CD8-positive, alpha-beta T cell (primary cell): ENCODE measurements at regions of chr11 and their contacts with region 1.

Region 1: GRCh38 chr11:66638177-66639065 is at the start of gene RBM4:
- DNase-seq: peak; percentile 92 to 100 (median 94)
- ATAC-seq: peak; percentile 89
- H3K4me3 ChIP-seq: peak within 1 kb of the TSS; percentile 87 to 88
- H3K4me3 Mint-ChIP-seq: peak within 1 kb of the TSS; percentile 98
- H3K27ac ChIP-seq: peak within 1 kb of the TSS; percentile 89 to 92
- H3K27ac Mint-ChIP-seq: peak within 1 kb of the TSS; percentile 97
- H3K4me1 ChIP-seq: peaks cover 53% of the 10 kb centered on the region
- H3K4me1 Mint-ChIP-seq: peaks cover 66% of the 10 kb centered on the region
- H3K27me3 ChIP-seq: no peaks in the 10 kb centered on the region
- H3K27me3 Mint-ChIP-seq: no peaks in the 10 kb centered on the region
- CTCF ChIP-seq: no peak
- total RNA-seq, gene RBM4: 183 to 191 TPM

Region 2: DNA sequence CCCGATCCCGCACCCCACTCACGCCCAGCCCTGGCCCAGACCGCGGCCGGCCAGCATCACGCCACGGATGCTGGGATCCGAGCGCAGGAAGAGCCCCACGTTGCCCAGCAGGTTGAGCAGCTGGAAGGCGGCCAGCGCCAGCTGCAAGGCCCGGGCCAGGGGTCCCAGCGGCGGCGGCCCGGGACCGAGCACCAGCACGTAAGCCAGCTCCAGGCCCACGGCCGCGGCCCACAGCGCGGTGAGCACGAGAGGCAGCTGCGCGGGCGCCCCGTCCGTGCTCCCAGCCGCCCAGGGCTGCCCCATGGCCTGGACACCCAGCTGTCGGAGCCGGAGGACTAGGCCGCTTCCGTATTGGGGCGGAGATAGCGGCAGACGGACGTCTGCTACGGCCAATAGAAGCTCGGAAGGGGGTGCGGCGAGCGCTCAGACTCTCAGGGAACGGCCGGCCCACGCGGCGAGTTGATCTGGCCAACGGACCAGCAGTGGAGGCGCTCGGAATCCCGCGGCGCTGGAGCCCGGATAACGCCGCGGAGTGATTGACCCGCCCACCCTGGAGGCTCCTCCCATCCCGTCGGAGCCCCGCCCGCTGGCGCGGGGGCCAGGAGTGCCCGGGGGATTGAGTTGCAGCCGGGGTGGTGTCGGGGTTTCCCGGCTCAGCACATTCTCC is 92.6 kb before region 1 on chr11 and contains the start of gene ZDHHC24:
- CTCF ChIA-PET with region 1: no interaction called
- POLR2A ChIA-PET with region 1: interaction called, 10 read pairs
- intact Hi-C with region 1: loop called in 1 of 2 experiments (anchors 5 kb)
- DNase-seq: peak; percentile 57 to 93 (median 78)
- ATAC-seq: peak; percentile 81
- H3K4me3 ChIP-seq: peak within 1 kb of the TSS; percentile 68 to 97
- H3K4me3 Mint-ChIP-seq: peak within 1 kb of the TSS; percentile 84
- H3K27ac ChIP-seq: peak within 1 kb of the TSS; percentile 79 to 83
- H3K27ac Mint-ChIP-seq: peak within 1 kb of the TSS; percentile 92
- H3K4me1 ChIP-seq: peaks cover 31% of the 10 kb centered on the region
- H3K4me1 Mint-ChIP-seq: peaks cover 40% of the 10 kb centered on the region
- H3K27me3 ChIP-seq: no peaks in the 10 kb centered on the region
- H3K27me3 Mint-ChIP-seq: no peaks in the 10 kb centered on the region
- CTCF ChIP-seq: no peak
- total RNA-seq, gene ZDHHC24: 15.0 to 15.9 TPM

Region 3: GRCh38 chr11:66592457-66593302 is 45.7 kb before region 1 on chr11 and contains the starts of genes CCDC87 and CCS:
- CTCF ChIA-PET with region 1: interaction called, 12 read pairs
- POLR2A ChIA-PET with region 1: interaction called, 35 read pairs
- intact Hi-C with region 1: loop called (anchors 1 kb)
- DNase-seq: peak; percentile 98 to 100 (median 99)
- ATAC-seq: peak; percentile 97
- H3K4me3 ChIP-seq: peak within 1 kb of the TSS; percentile 68 to 97
- H3K4me3 Mint-ChIP-seq: peak within 1 kb of the TSS; percentile 100
- H3K27ac ChIP-seq: peak within 1 kb of the TSS; percentile 84 to 86
- H3K27ac Mint-ChIP-seq: peak within 1 kb of the TSS; percentile 99
- H3K4me1 ChIP-seq: peaks cover 33% of the 10 kb centered on the region
- H3K4me1 Mint-ChIP-seq: peaks cover 39% of the 10 kb centered on the region
- H3K27me3 ChIP-seq: no peaks in the 10 kb centered on the region
- H3K27me3 Mint-ChIP-seq: no peaks in the 10 kb centered on the region
- CTCF ChIP-seq: peak; percentile 55
- total RNA-seq, gene CCDC87: 0.53 to 0.65 TPM
- total RNA-seq, gene CCS: 30.0 to 32.3 TPM

Region 4: GRCh38 chr11:66651016-66651415 is 12.6 kb after region 1 on chr11:
- CTCF ChIA-PET with region 1: interaction called, 6 read pairs
- POLR2A ChIA-PET with region 1: interaction called, 17 read pairs
- intact Hi-C with region 1: no loop called
- DNase-seq: peak in 2 of 9 experiments; percentile 17 to 47
- ATAC-seq: no peak
- H3K4me3 ChIP-seq: no peak overlapping the region
- H3K4me3 Mint-ChIP-seq: no peak overlapping the region
- H3K27ac ChIP-seq: no peak overlapping the region
- H3K27ac Mint-ChIP-seq: no peak overlapping the region
- H3K4me1 ChIP-seq: peaks cover 30% of the 10 kb centered on the region
- H3K4me1 Mint-ChIP-seq: peaks cover 58% of the 10 kb centered on the region
- H3K27me3 ChIP-seq: no peaks in the 10 kb centered on the region
- H3K27me3 Mint-ChIP-seq: no peaks in the 10 kb centered on the region
- CTCF ChIP-seq: no peak

Region 5: DNA sequence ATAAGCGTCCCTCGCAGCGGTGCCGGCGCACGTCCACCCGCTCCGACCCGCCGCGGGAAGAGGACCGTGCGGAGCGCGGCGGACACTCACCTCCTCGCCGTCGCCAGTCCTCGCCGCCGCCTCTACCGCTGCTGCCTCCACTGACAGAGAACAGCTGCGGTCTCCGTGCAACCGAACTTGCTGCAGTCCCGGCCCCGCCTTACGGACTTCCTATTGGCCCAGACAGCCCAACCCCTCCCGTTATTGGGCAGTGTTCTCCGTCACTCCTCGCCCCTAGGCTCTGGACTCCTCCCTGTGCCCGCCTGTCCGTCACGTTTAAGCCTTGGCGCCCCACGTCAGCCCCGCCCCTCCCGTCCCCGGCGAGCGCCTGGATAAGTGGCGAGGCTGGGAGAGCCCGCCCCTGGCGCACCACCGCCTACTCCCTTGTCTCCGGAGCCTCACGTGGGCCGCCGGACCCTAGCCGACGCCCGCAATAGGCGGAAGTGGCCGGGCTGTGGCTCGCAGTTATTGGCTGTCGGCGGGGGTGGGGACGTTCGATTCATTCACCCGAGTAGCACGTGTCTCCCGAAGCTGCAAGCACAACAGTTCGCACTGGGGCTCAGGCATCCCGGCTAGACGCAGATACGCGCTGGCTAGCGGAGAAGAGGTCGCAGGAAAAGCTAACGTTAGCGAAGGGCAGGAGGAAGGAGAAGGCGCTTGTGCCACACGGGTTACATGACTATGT is 320.0 kb after region 1 on chr11 and contains the start of gene PC:
- CTCF ChIA-PET with region 1: no interaction called
- POLR2A ChIA-PET with region 1: no interaction called
- intact Hi-C with region 1: loop called in 1 of 2 experiments (anchors 1 kb)
- DNase-seq: peak; percentile 91 to 99 (median 97)
- ATAC-seq: peak; percentile 96
- H3K4me3 ChIP-seq: peak within 1 kb of the TSS; percentile 51 to 71
- H3K4me3 Mint-ChIP-seq: peak within 1 kb of the TSS; percentile 90
- H3K27ac ChIP-seq: peak within 1 kb of the TSS; percentile 47 to 49
- H3K27ac Mint-ChIP-seq: peak within 1 kb of the TSS; percentile 68
- H3K4me1 ChIP-seq: peaks cover 6% of the 10 kb centered on the region
- H3K4me1 Mint-ChIP-seq: peaks cover 18% of the 10 kb centered on the region
- H3K27me3 ChIP-seq: no peaks in the 10 kb centered on the region
- H3K27me3 Mint-ChIP-seq: peaks cover 2% of the 10 kb centered on the region
- CTCF ChIP-seq: no peak
- total RNA-seq, gene PC: 4.4 to 4.5 TPM

Region 6: DNA sequence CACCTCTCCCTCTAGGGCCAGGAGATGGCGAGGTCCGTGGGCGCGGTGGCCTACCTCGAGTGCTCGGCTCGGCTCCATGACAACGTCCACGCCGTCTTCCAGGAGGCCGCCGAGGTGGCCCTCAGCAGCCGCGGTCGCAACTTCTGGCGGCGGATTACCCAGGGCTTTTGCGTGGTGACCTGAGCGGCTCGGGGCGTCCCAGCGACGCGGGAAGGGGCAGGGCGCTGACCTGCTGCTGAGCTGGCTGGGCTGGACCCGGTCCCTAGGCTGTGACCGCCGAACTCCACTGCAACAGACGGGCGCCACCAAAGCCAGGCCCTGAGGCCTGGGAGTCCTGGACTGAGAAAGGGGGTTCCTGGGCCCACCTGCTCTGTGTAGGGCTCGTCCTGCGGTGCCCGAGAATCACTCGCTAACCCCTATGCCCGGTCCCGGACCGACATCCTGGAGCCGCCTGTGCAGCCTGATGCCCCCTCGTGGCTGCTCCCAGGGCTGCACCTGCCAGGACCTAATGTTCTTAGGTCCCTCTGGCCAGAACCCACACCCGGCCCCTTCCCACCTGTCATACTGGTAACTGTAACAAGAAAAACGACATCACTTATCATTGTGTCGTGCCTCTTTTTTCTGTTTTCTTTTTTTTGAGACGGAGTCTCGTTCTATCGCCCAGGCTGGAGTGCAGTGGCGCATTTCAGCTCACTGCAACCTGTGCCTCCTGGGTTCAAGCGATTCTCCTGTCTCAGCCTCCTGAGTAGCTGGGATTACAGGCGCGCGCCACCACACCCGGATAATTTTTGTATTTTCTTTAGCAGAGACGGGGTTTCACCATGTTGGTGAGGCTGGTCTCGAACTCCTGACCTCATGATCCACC is 433.2 kb after region 1 on chr11:
- CTCF ChIA-PET with region 1: no interaction called
- POLR2A ChIA-PET with region 1: no interaction called
- intact Hi-C with region 1: no loop called
- DNase-seq: peak; percentile 43 to 81 (median 71)
- ATAC-seq: peak; percentile 96
- H3K4me3 ChIP-seq: peak overlapping the region; percentile 26 to 46
- H3K4me3 Mint-ChIP-seq: peak overlapping the region; percentile 72
- H3K27ac ChIP-seq: no peak overlapping the region
- H3K27ac Mint-ChIP-seq: no peak overlapping the region
- H3K4me1 ChIP-seq: peaks cover 7% of the 10 kb centered on the region
- H3K4me1 Mint-ChIP-seq: peaks cover 4% of the 10 kb centered on the region
- H3K27me3 ChIP-seq: no peaks in the 10 kb centered on the region
- H3K27me3 Mint-ChIP-seq: peaks cover 5% of the 10 kb centered on the region
- CTCF ChIP-seq: peak; percentile 72